ENCODE measurements at regions of chr1 and their contacts with region 1.

Region 1: DNA sequence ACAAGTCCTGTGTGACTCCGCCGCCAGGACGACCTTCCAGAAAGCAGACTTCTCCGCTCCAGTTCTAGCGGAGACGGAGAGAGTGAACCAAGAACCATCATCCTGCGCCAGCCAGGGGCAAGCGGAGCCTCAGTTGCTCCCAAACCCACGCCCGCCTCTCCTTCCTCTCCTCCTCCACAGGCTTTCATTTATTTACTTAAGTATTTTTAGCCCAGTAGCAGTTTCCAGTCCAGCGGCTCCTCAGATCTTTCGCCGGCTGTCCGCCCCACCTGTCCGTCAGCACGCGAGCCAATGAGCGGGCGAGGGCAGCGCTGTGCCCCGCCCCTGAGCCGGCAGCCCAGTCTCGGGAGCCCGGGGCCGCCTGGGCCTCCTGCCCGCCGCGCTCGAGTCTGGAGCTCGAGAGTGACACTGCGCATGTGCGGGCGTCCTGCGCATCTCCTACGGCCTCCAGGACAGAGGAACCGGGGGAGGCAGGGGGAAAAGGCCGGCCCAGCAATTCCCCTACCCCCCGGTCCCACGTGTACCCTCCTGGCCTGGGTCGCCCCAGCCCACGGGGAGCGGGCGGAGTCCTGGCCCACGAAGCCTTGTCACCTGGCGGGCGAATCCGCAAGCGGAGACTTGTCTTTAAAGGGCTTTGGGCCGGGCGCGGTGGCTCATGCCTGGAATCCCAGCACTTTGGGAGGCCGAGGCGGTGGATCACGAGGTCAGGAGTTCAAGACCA is at the start of gene FALEC:
- H3K4me3 ChIP-seq: peak within 1 kb of the TSS; percentile 56
- H3K27ac ChIP-seq: peak within 1 kb of the TSS; percentile 44; the same call in 1 of the 2 replicates
- H3K4me1 ChIP-seq: no peaks in the 10 kb centered on the region
- CTCF ChIP-seq: no peak; the same call in 1 of the 2 replicates

Region 2: GRCh38 chr1:150537732-150538684 is 22.5 kb after region 1 on chr1:
- CTCF ChIA-PET with region 1: interaction called, 50 read pairs
- POLR2A ChIA-PET with region 1: interaction called, 7 read pairs
- H3K4me3 ChIP-seq: no peak overlapping the region
- H3K27ac ChIP-seq: no peak overlapping the region
- H3K4me1 ChIP-seq: no peaks in the 10 kb centered on the region
- CTCF ChIP-seq: no peak

Measured in HEK293 (cell line).